ENCODE measurements at regions of chr1 and their contacts with region 1.

Region 1: GRCh38 chr1:177451191-177451590 is 280.4 kb downstream of the BRINP2 start:
- DNase-seq: no peak
- H3K4me3 ChIP-seq: no peak overlapping the region
- CTCF ChIP-seq: no peak

Region 2: GRCh38 chr1:177351361-177352119 is 99.7 kb before region 1 on chr1:
- in situ Hi-C with region 1: no loop called
- DNase-seq: no peak
- H3K4me3 ChIP-seq: no peak overlapping the region
- CTCF ChIP-seq: no peak

Region 3: GRCh38 chr1:177413982-177414596 is 37.1 kb before region 1 on chr1:
- in situ Hi-C with region 1: loop called (anchors 5 kb)
- DNase-seq: no peak
- H3K4me3 ChIP-seq: no peak overlapping the region
- CTCF ChIP-seq: no peak

Region 4: DNA sequence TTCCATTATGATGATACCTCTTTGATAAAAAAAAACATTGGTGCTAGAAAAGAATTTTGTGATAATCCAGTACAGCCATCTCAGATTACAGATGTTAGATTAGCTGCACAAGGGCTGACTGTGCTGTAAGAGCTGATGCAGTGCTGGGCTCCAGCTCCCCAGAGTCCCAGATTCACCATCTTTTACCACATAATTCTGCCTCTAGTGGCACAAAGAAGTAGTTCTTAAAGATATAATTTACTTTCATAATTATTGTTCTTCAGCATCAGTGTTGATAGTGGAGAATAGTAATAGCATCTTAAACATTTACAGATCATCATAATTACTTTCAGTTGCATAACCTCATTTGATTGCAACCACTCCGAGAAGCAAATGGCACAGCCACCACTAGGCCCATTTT is 18.3 kb before region 1 on chr1:
- in situ Hi-C with region 1: no loop called
- DNase-seq: no peak
- H3K4me3 ChIP-seq: no peak overlapping the region
- CTCF ChIP-seq: peak; percentile 15

Measured in astrocyte of the cerebellum (primary cell).